Heart left ventricle (tissue), 16 donors: ENCODE measurements at regions of chr2 and their contacts with region 1.

Region 1: DNA sequence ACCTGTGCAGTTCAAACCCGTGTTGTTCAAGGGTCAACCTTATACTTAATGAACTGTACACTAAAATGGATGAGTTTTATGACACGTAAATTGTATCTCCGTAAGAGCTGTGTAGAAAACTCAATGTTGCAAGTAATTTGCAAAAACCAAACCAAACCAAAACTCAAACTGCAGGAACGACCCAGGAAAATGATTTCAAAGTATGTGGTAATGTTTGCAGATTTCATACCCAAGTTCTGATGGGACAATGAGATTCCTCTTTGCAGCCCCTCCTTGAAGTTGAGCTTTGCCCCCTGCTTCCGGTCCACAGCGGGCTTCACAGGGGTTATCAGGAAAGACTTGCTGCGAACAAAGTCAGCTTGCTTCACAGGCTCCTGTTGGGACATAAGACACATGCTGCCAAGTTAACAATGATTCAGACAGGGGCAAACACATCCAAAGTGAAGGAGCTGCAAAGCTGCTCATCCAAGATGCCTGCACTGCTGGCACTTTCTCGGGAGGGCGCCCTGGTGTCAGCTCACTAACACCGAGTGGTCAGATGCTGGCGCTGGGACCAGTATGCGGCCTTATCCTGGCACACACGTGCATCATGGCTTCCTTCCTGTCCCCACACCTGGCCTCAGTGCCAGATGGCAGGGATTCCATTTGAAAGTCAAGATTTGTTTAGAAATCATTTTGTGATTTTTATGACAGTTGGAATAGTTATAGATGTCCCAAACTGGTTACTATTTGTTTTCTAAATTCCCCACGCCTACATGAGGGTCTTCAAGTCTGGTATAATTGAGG is 65.2 kb upstream of the MGAT4A start:
- DNase-seq: no peak
- ATAC-seq: no peak
- H3K4me3 ChIP-seq: no peak overlapping the region
- H3K27ac ChIP-seq: no peak overlapping the region
- H3K4me1 ChIP-seq: peaks cover 0 to 24% (median 2%) of the 10 kb centered on the region in 12 donors
- H3K27me3 ChIP-seq: no peaks in the 10 kb centered on the region
- CTCF ChIP-seq: no peak
- POLR2A ChIP-seq: no peak

Region 2: GRCh38 chr2:98776136-98776535 is 19.9 kb before region 1 on chr2:
- intact Hi-C with region 1: loop called in 1 of 10 experiments (anchors 2 kb)
- DNase-seq: no peak
- ATAC-seq: no peak
- H3K4me3 ChIP-seq: no peak overlapping the region
- H3K27ac ChIP-seq: no peak overlapping the region
- H3K4me1 ChIP-seq: peaks cover 0 to 21% (median 4%) of the 10 kb centered on the region in 12 donors
- H3K27me3 ChIP-seq: peaks cover 0 to 2% (median 0%) of the 10 kb centered on the region in 9 donors
- CTCF ChIP-seq: no peak
- POLR2A ChIP-seq: no peak